ENCODE measurements at regions of chr16 and their contacts with region 1.

Region 1: DNA sequence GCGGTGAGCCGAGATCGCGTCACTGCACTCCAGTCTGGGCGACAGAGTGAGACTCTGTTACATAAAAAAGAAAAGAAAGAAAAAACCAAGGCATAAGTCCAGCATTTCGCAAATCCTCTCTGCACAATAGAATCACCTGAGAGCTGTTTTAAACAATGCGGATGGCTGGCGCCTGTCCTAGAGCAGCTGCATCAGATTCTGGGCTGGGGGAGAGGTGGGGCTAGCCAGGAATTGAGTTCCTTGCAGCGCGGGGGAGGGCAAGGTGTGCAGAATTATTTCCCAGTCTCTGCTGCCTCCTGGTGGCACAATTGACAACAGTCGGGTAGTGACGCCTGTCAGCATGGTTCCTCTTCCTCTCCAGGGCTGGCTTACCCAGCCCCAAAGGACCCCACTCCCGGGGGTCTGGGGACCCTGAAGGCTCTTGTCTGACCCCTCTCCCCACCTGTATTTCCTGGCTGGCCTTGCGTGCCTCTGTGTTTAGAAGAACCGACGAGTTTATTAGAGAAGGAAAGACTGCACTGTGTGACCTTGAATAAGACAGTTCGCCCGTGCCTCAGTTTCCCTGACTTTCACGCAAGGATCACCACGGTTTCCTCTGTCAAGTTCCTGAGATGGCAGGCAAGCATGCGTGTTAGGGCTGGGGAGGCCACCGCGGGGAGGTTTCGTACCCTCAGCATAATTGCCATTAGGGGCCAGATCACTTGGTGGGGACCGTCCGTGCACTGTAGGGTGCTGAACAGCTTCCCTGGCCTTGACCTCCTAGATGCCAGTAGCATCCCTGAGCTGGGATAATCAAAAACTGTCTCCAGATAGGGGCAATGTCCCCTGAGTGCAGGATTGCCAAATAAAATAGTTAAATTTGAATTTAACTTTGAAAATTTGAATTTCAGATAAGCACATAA is 41.0 kb upstream of the PLCG2 start:
- DNase-seq: peak; percentile 90
- ATAC-seq: peak; percentile 97
- H3K4me3 Mint-ChIP-seq: peak overlapping the region; percentile 34
- H3K27ac Mint-ChIP-seq: no peak overlapping the region
- H3K4me1 Mint-ChIP-seq: peaks cover 6% of the 10 kb centered on the region
- H3K27me3 Mint-ChIP-seq: peaks cover 1% of the 10 kb centered on the region
- CTCF ChIP-seq: peak; percentile 90

Region 2: DNA sequence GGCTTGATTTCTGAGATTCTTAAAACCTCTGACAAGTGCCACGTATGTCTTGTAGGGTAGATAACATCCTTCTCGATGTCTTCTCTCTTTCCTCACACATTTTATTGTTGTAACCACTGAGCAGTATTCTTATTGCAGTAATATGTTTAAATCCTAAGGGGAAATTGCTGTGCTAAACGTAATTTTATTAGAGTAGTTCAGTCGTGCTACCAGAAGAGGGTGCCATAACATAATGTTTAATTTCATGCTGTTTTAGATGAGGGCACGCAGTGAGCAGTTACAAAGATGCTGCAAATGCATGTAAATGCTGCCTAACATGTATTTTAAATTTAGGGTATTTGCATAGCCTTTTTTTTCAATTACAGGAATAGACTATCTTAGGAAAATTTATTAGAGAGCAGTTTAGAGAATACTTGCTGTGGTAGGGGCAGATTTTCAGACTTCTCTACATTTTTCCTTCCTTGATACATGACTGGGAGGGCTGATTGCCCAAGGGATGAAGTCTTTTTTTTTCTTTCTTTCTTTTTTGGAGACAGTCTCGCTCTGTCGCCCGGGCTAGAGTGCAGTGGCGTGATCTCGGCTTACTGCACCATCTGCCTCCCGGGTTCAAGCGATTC is 371.7 kb before region 1 on chr16:
- CTCF ChIA-PET with region 1: interaction called, 44 read pairs
- POLR2A ChIA-PET with region 1: no interaction called
- intact Hi-C with region 1: no loop called
- DNase-seq: peak; percentile 10
- ATAC-seq: peak; percentile 67
- H3K4me3 Mint-ChIP-seq: no peak overlapping the region
- H3K27ac Mint-ChIP-seq: no peak overlapping the region
- H3K4me1 Mint-ChIP-seq: no peaks in the 10 kb centered on the region
- H3K27me3 Mint-ChIP-seq: no peaks in the 10 kb centered on the region
- CTCF ChIP-seq: peak; percentile 80

Region 3: DNA sequence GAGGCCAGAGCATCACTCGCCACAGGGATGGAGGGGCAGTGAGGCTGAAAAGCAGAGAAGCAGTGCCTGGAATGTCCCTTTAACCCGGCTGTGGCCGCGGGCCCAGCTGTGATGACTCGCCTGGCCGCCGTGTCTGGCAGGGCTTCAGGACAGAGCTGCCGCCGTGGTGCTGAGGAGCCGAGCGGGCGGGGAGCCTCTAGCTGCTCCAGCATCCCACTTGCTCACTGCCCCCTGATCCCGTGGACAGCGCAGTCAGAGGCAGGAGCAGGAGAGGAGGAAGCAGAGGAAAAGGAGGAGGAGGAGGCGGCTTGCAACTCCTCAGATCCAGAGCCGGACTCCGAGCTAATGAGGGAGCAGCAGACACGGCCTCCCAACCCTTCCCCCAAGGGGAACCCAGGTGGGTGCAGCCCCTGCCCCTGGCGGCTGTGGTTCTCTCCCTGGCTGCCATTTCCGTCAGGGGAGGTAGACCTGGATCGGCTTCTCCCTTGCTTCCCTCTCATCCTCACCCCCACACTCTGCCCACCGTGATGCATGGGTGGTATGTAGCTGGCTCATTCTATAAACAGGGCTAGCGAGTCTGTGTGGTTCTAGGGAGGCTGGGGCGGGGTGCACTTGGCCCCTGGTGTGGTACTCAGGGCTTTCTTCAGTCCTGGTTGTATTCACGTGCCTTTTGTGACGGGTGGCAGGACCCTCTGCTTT is 127.8 kb before region 1 on chr16:
- CTCF ChIA-PET with region 1: no interaction called
- POLR2A ChIA-PET with region 1: no interaction called
- intact Hi-C with region 1: no loop called
- DNase-seq: no peak
- ATAC-seq: no peak
- H3K4me3 Mint-ChIP-seq: no peak overlapping the region
- H3K27ac Mint-ChIP-seq: no peak overlapping the region
- H3K4me1 Mint-ChIP-seq: peaks cover 3% of the 10 kb centered on the region
- H3K27me3 Mint-ChIP-seq: no peaks in the 10 kb centered on the region
- CTCF ChIP-seq: no peak

Measured in activated CD8-positive, alpha-beta T cell treated with anti-CD3 and anti-CD28 coated beads for 36 hours (primary cell).